ENCODE measurements at regions of chr1 and their contacts with region 1.

Region 1: GRCh38 chr1:111227851-111228747 is 586 bp downstream of the CHI3L2 start:
- DNase-seq: peak; percentile 96
- ATAC-seq: peak; percentile 99
- H3K4me3 ChIP-seq: peak overlapping the region in 1 of 3 experiments; percentile 22; a peak in 1 of 6 replicates
- H3K27ac ChIP-seq: peak overlapping the region; percentile 75
- H3K4me1 ChIP-seq: peaks cover 70% of the 10 kb centered on the region
- H3K27me3 ChIP-seq: no peaks in the 10 kb centered on the region
- CTCF ChIP-seq: no peak
- EP300 ChIP-seq: peak in 1 of 2 experiments; percentile 70; a peak in 2 of 4 replicates
- POLR2A ChIP-seq: peak in 1 of 2 experiments; percentile 39; a peak in 1 of 4 replicates
- RAD21 ChIP-seq: no peak

Region 2: GRCh38 chr1:111133866-111134265 is 94.2 kb before region 1 on chr1:
- CTCF ChIA-PET with region 1: no interaction called
- POLR2A ChIA-PET with region 1: no interaction called
- in situ Hi-C with region 1: no loop called
- intact Hi-C with region 1: no loop called
- DNase-seq: no peak
- ATAC-seq: no peak
- H3K4me3 ChIP-seq: no peak overlapping the region
- H3K27ac ChIP-seq: no peak overlapping the region
- H3K4me1 ChIP-seq: peaks cover 10% of the 10 kb centered on the region
- H3K27me3 ChIP-seq: no peaks in the 10 kb centered on the region
- CTCF ChIP-seq: no peak
- EP300 ChIP-seq: no peak
- POLR2A ChIP-seq: no peak
- RAD21 ChIP-seq: no peak

Region 3: DNA sequence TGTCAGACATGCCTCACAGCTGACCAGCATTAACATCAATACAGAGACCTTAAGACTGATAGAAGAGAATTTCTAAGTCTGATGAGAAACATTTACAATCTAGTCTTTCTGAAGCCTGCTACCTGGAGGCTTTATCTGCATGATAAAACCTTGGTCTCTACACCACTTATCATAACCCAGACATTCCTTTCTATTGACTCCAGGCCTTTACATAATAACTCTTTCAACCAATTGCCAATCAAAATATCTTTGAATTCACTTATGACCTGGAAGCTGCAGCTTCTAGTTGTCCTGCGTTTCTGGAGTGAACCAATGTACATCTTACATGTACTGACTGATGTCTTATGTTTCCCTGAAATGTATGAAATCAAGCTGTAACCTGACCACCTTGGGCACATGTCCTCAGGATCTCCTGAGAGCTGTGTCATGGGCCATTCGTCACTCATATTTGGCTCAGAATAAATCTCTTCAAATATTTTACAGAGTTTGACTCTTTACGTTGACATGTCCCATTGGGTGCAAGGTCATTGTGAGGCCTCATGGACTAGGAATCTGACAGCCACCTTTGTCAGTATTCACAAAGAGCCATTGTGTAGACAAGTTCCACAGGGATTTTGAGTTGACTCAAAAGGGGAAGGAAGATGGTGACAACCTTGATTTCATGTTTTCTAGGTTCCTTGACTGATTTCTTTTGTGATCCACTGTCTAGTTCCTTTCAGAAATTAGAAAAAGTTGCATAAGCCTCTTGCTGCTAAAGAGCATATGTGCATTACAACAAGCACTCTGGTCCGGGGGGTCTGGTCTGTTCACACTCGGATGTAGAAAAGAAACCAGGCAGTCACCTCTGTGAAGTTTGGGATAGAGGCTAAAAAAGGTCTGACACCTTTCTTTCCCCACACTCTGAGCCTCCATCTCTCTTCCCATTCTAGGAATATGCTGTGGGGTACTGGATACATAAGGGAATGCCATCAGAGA is 10.0 kb after region 1 on chr1:
- CTCF ChIA-PET with region 1: no interaction called
- POLR2A ChIA-PET with region 1: interaction called, 14 read pairs
- in situ Hi-C with region 1: no loop called
- intact Hi-C with region 1: loop called (anchors 1 kb)
- DNase-seq: peak; percentile 95
- ATAC-seq: peak; percentile 89
- H3K4me3 ChIP-seq: no peak overlapping the region
- H3K27ac ChIP-seq: peak overlapping the region; percentile 85
- H3K4me1 ChIP-seq: peaks cover 78% of the 10 kb centered on the region
- H3K27me3 ChIP-seq: no peaks in the 10 kb centered on the region
- CTCF ChIP-seq: no peak
- EP300 ChIP-seq: peak in 1 of 2 experiments; percentile 75; a peak in 2 of 4 replicates
- POLR2A ChIP-seq: no peak
- RAD21 ChIP-seq: no peak

Region 4: DNA sequence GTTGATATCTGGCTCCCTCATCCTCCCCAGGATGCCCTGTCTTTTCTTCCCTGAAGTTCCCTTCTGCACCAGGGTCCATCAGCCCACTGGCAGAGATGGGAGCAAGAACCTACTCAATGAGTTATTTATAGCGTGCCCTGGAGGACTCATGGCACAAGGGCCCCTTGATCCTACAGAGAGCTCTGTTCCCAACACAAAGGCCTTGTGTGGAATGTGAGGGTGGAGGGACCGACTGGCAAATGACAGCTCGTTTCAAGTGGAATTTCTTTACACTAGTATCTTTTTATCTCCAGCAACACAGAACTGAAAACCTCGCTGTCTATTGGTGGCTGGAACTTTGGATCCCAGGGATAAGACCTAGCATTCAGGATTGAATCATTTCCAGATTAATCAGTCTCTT is 21.9 kb after region 1 on chr1:
- CTCF ChIA-PET with region 1: no interaction called
- POLR2A ChIA-PET with region 1: interaction called, 10 read pairs
- in situ Hi-C with region 1: no loop called
- intact Hi-C with region 1: loop called (anchors 1 kb)
- DNase-seq: peak; percentile 76
- ATAC-seq: peak; percentile 69
- H3K4me3 ChIP-seq: no peak overlapping the region
- H3K27ac ChIP-seq: no peak overlapping the region
- H3K4me1 ChIP-seq: peaks cover 82% of the 10 kb centered on the region
- H3K27me3 ChIP-seq: peaks cover 2 to 5% of the 10 kb centered on the region in 2 experiments; a peak in 1 of 5 replicates
- CTCF ChIP-seq: no peak
- EP300 ChIP-seq: no peak
- POLR2A ChIP-seq: no peak
- RAD21 ChIP-seq: no peak

Measured in HepG2 (cell line).